AG04449 (cell line): ENCODE measurements at regions of chr2 and their contacts with region 1.

Region 1: GRCh38 chr2:218995972-218996711 is 2.9 kb upstream of the CRYBA2 start:
- DNase-seq: no peak
- H3K4me3 ChIP-seq: peak overlapping the region; percentile 50
- CTCF ChIP-seq: peak; percentile 90

Region 2: DNA sequence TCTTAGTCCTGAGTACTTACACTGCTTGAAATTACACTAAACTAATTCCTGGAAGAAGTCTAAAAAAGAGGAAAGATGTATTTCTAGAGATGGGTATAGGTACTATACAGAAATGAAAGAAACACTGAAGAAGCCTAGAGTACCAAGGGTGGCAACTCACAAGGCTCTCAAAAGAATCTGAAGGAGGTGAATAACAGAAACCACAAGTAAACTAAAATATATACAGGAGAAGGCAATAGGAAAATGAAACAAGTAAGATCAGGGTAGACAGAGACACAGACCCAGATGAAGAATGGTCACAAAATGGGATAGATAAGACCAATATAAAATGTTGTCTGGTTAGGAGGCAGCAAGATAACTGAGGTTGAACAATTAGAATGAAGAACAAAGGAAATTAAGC is 487.8 kb before region 1 on chr2:
- CTCF ChIA-PET with region 1: no interaction called
- POLR2A ChIA-PET with region 1: no interaction called
- DNase-seq: no peak
- H3K4me3 ChIP-seq: no peak overlapping the region
- CTCF ChIP-seq: no peak

Region 3: GRCh38 chr2:218962859-218963492 is 33.2 kb before region 1 on chr2:
- CTCF ChIA-PET with region 1: interaction called, 21 read pairs
- POLR2A ChIA-PET with region 1: no interaction called
- DNase-seq: no peak
- H3K4me3 ChIP-seq: no peak overlapping the region
- CTCF ChIP-seq: no peak

Region 4: GRCh38 chr2:219010162-219010756 is 14.1 kb after region 1 on chr2:
- CTCF ChIA-PET with region 1: interaction called, 62 read pairs
- POLR2A ChIA-PET with region 1: no interaction called
- DNase-seq: no peak
- H3K4me3 ChIP-seq: no peak overlapping the region
- CTCF ChIP-seq: peak; percentile 18

Region 5: GRCh38 chr2:219133976-219134375 is 137.8 kb after region 1 on chr2:
- CTCF ChIA-PET with region 1: interaction called, 14 read pairs
- POLR2A ChIA-PET with region 1: no interaction called
- DNase-seq: no peak
- H3K4me3 ChIP-seq: no peak overlapping the region
- CTCF ChIP-seq: no peak

Region 6: GRCh38 chr2:219149667-219150066 is 153.5 kb after region 1 on chr2:
- CTCF ChIA-PET with region 1: interaction called, 135 read pairs
- POLR2A ChIA-PET with region 1: interaction called, 3 read pairs
- DNase-seq: no peak
- H3K4me3 ChIP-seq: no peak overlapping the region
- CTCF ChIP-seq: no peak

Region 7: DNA sequence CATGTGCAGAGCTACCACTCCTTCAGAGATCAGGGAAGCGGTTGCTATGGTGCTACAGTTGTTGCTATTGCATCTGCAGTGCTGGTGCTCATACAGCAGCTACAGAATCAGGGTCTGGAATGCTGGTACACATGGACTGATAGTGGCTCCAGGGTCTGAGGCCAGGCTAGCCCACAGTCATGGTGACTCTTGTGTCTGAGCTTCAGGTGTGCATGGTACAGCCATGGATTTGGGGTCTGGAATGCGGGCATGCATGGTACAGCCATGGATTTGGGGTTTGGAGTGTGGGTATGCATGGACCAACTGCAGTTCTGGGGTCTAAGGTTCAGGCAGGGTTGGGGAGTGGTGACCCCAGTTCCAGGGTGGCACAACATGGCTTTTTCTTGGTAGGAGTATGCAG is 816.5 kb after region 1 on chr2:
- CTCF ChIA-PET with region 1: no interaction called
- POLR2A ChIA-PET with region 1: no interaction called
- DNase-seq: no peak
- H3K4me3 ChIP-seq: no peak overlapping the region
- CTCF ChIP-seq: no peak